Mammary epithelial cell (primary cell): ENCODE measurements at regions of chr7 and their contacts with region 1.

Region 1: GRCh38 chr7:47844311-47844710 is 104.0 kb downstream of the PKD1L1 start:
- DNase-seq: no peak
- H3K4me3 ChIP-seq: no peak overlapping the region
- H3K27ac ChIP-seq: no peak overlapping the region
- H3K4me1 ChIP-seq: peaks cover 6% of the 10 kb centered on the region
- H3K27me3 ChIP-seq: no peaks in the 10 kb centered on the region
- CTCF ChIP-seq: no peak

Region 2: DNA sequence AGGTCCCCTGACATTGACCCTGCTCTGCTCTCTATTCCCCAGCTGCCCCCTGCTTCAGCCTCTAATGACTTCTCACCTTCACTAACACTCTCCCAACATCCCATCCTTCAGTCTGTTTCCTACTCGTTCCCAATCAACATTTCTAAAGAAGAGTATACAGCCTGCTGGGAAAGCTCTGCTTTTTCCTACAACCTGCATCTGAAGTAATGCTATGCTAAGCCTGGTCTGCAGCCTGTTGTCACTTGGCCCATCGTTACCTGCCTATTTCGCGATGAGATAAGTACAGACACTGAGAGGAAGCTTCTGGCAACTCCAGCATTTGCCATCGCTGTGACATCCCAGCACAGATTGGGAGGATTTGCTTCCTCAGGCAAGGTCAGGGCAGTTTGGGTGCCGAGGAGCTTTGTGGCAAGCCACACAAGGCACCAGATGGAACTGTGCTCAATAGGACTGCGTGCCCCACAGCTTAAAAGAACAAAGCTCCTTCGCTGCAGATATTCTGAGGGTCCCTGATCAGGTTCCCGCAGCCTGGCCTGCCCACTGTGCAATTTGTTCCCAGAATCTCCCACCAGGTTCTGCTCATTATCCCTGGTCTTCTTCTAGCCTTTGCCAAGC is 52.6 kb after region 1 on chr7:
- CTCF ChIA-PET with region 1: no interaction called
- dilution Hi-C with region 1: loop called (anchors 5 kb)
- in situ Hi-C with region 1: no loop called
- intact Hi-C with region 1: no loop called
- DNase-seq: no peak
- H3K4me3 ChIP-seq: no peak overlapping the region
- H3K27ac ChIP-seq: no peak overlapping the region
- H3K4me1 ChIP-seq: peaks cover 5% of the 10 kb centered on the region
- H3K27me3 ChIP-seq: no peaks in the 10 kb centered on the region
- CTCF ChIP-seq: no peak